MCF 10A (cell line): ENCODE measurements at regions of chr4 and their contacts with region 1.

Region 1: DNA sequence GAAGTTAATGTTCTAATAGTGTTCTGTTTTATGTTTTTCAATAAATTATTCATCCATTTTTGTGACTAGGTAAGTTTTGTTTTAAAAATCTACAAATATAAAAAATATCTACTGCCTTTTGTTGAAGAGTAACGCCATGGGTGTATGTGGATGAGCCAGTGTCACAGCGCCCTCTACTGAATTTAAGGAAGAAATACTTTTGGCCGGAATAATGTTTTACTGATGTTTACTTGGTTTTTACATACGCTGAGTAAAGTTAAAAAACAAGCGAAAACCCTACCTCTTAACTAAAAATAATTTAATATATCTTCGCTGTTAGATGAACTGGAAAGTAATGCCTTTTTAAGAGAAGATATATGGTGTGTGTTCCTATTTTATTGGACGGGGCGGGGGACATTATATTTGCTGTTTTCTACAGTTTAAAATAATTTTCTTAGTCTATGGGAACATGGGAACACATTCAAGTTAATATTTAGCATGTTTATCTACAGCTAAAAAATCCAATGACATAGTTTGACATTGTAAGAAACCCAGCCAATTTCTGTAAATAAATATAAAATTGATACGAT is 86.1 kb downstream of the CPE start:
- DNase-seq: peak; percentile 41
- H3K4me3 Mint-ChIP-seq: no peak overlapping the region
- H3K27ac Mint-ChIP-seq: no peak overlapping the region
- H3K4me1 Mint-ChIP-seq: peaks cover 5% of the 10 kb centered on the region
- H3K27me3 Mint-ChIP-seq: no peaks in the 10 kb centered on the region
- CTCF ChIP-seq: peak; percentile 78

Region 2: DNA sequence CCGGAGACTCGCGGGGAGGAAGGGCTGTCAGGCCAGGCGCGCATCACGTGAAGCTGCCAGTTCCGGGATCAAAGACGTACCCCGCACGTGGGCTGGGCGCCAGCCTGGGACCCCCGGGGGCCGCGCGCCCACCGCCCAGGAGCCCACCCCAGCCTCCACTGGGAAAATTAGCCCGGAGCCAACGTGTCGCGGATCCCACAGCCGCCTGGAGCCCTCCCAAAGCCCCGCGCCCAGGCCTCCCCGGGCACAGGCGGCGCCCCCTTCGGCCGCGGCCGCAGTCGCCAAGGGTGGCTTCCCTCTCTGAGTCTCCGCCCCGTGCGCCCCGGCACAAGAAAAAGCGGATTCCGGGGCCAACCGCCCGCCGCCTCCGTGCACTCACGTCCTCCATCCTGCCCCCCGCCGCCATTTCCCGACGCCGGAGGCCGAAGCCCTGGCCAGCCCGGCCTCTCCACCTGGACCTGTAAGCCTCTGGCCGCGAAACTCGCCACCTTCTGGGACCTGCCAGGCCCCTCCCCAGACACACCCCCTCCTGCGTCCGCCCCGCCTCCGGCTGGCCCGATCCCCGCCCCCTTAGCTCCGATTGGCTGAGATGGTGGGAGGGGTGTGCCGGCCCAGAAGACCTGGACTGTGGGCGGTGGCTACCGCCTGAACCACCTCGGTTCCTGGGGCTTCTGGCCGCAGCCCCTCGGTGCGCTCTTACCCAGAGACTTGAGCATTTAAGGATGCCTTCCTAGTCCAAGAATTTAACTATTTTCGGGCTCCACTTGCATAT is 352.3 kb before region 1 on chr4 and contains the start of gene TMEM192:
- CTCF ChIA-PET with region 1: interaction called, 14 read pairs
- POLR2A ChIA-PET with region 1: no interaction called
- intact Hi-C with region 1: loop called (anchors 1 kb)
- DNase-seq: peak; percentile 95
- H3K4me3 Mint-ChIP-seq: peak within 1 kb of the TSS; percentile 97
- H3K27ac Mint-ChIP-seq: peak within 1 kb of the TSS; percentile 94
- H3K4me1 Mint-ChIP-seq: peaks cover 9% of the 10 kb centered on the region
- H3K27me3 Mint-ChIP-seq: no peaks in the 10 kb centered on the region
- CTCF ChIP-seq: no peak
- total RNA-seq, gene TMEM192: 26.6 and 31.6 TPM in 2 replicates

Region 3: DNA sequence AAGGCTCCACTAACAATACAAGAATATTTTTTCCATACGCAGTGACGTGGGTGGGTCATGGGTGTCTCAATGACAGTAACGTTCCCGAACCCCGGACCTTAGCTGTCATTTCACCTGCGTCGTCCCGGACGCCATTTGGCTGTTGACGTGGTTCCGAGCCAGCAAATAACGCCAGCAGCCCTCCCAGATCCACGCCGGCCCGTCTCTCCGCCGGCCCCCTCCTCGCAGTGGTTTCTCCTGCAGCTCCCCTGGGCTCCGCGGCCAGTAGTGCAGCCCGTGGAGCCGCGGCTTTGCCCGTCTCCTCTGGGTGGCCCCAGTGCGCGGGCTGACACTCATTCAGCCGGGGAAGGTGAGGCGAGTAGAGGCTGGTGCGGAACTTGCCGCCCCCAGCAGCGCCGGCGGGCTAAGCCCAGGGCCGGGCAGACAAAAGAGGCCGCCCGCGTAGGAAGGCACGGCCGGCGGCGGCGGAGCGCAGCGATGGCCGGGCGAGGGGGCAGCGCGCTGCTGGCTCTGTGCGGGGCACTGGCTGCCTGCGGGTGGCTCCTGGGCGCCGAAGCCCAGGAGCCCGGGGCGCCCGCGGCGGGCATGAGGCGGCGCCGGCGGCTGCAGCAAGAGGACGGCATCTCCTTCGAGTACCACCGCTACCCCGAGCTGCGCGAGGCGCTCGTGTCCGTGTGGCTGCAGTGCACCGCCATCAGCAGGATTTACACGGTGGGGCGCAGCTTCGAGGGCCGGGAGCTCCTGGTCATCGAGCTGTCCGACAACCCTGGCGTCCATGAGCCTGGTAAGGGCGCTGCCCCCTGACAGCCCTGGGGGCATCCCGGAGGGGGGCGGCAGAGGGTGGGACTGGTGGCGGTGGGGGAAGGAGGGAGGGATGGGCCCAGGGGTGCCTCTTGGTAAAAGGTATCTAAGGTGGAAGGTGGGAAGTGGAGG is 85.9 kb before region 1 on chr4 and contains the start of gene CPE:
- CTCF ChIA-PET with region 1: interaction called, 6 read pairs
- POLR2A ChIA-PET with region 1: no interaction called
- intact Hi-C with region 1: loop called (anchors 2 kb)
- DNase-seq: peak; percentile 75
- H3K4me3 Mint-ChIP-seq: peak within 1 kb of the TSS; percentile 77
- H3K27ac Mint-ChIP-seq: no peak within 1 kb of the TSS
- H3K4me1 Mint-ChIP-seq: peaks cover 6% of the 10 kb centered on the region
- H3K27me3 Mint-ChIP-seq: no peaks in the 10 kb centered on the region
- CTCF ChIP-seq: peak; percentile 41
- total RNA-seq, gene CPE: 8.3 and 9.1 TPM in 2 replicates